CD8-positive, alpha-beta T cell (primary cell): ENCODE measurements at regions of chr12 and their contacts with region 1.

Region 1: DNA sequence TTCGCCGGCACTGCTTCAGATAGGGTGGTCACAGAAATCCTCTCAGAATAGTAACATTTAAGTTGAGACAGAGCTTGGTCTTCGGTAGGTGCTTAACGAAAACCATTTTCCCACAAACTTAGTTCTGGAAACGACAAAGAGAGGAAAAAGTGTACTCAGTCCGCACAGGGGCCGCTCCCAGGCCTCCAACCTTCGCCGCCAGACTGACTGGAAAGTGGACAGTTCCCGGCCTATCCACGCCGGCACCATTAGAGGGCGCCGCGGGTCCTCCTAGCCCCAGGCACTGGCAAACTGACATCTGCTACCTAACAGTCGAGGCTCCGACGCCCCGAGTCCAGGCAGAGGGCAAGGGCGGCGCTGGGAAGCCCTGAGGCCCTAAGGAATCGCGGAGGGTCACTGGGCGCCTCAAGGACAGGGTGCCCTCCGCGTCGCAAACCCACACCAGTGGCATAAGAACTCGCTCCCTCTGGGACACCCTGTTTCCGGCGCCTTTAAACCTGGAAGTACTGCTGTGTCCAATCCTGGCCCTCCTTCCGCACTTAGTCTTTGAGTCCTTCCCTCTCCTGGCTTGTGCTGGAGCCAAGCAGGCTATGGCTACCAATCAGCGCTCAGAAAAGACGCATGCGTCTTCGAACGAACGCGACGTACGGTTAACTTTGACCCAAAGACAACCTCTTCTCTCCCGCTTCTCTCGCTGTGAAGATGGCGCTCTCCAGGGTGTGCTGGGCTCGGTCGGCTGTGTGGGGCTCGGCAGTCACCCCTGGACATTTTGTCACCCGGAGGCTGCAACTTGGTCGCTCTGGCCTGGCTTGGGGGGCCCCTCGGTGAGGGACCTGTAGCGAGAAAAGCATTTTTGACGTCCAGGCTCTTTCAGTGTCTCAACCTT is at the start of gene LETMD1:
- DNase-seq: peak; percentile 83 to 99 (median 88)
- ATAC-seq: peak; percentile 94
- H3K4me3 ChIP-seq: peak within 1 kb of the TSS; percentile 79 to 83
- H3K4me3 Mint-ChIP-seq: peak within 1 kb of the TSS; percentile 98
- H3K27ac ChIP-seq: peak within 1 kb of the TSS; percentile 74 to 96
- H3K27ac Mint-ChIP-seq: peak within 1 kb of the TSS; percentile 97
- H3K4me1 ChIP-seq: peaks cover 23% of the 10 kb centered on the region
- H3K4me1 Mint-ChIP-seq: peaks cover 34% of the 10 kb centered on the region
- H3K27me3 ChIP-seq: no peaks in the 10 kb centered on the region
- H3K27me3 Mint-ChIP-seq: no peaks in the 10 kb centered on the region
- CTCF ChIP-seq: peak; percentile 95
- total RNA-seq, gene LETMD1: 51.3 to 55.2 TPM

Region 2: DNA sequence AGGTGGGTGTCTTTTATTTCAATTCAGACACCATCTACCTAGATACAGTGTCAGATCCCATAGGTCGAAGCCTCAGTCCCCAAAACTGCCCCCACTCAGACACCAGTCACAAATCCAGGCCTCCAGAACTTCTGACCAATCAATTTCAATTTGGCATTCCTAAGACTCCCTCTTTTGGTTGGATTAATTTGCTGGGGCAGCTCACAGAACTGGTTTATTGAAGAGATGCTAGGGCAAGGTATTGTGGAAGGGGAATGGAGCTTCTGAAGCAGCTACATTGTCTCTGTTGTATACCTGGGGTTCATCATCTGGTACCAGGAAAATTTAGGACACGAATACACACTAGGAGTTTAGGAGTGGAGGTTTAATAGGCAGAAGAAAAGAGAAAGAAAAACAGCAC is 660.8 kb before region 1 on chr12:
- CTCF ChIA-PET with region 1: no interaction called
- POLR2A ChIA-PET with region 1: no interaction called
- intact Hi-C with region 1: no loop called
- DNase-seq: no peak
- ATAC-seq: no peak
- H3K4me3 ChIP-seq: no peak overlapping the region
- H3K4me3 Mint-ChIP-seq: no peak overlapping the region
- H3K27ac ChIP-seq: no peak overlapping the region
- H3K27ac Mint-ChIP-seq: no peak overlapping the region
- H3K4me1 ChIP-seq: no peaks in the 10 kb centered on the region
- H3K4me1 Mint-ChIP-seq: no peaks in the 10 kb centered on the region
- H3K27me3 ChIP-seq: no peaks in the 10 kb centered on the region
- H3K27me3 Mint-ChIP-seq: no peaks in the 10 kb centered on the region
- CTCF ChIP-seq: no peak

Region 3: DNA sequence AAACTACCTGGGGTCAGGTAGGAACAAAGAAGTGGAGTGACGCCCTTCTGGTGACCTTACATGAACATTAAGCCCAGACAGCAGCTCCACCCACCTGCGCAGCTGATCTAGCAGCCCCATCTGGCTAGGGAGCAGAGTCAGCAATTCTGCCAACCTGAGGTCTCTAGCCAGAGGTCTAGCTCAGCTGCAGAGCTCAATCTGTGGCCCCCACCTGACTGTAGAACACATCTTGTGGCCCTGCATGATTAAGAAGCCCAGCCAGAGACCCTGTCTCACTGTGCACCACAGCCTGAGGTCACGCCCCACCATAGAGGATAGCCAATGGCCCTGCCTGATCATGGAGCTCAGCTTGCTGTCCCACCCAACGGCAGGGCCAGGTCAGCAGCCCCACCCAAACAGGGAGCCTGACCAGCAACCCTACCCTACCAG is 146.2 kb before region 1 on chr12:
- CTCF ChIA-PET with region 1: no interaction called
- POLR2A ChIA-PET with region 1: no interaction called
- intact Hi-C with region 1: no loop called
- DNase-seq: no peak
- ATAC-seq: no peak
- H3K4me3 ChIP-seq: no peak overlapping the region
- H3K4me3 Mint-ChIP-seq: no peak overlapping the region
- H3K27ac ChIP-seq: no peak overlapping the region
- H3K27ac Mint-ChIP-seq: no peak overlapping the region
- H3K4me1 ChIP-seq: no peaks in the 10 kb centered on the region
- H3K4me1 Mint-ChIP-seq: no peaks in the 10 kb centered on the region
- H3K27me3 ChIP-seq: no peaks in the 10 kb centered on the region
- H3K27me3 Mint-ChIP-seq: no peaks in the 10 kb centered on the region
- CTCF ChIP-seq: no peak

Region 4: GRCh38 chr12:50936821-50937530 is 110.9 kb before region 1 on chr12:
- CTCF ChIA-PET with region 1: no interaction called
- POLR2A ChIA-PET with region 1: no interaction called
- intact Hi-C with region 1: no loop called
- DNase-seq: no peak
- ATAC-seq: no peak
- H3K4me3 ChIP-seq: no peak overlapping the region
- H3K4me3 Mint-ChIP-seq: no peak overlapping the region
- H3K27ac ChIP-seq: no peak overlapping the region
- H3K27ac Mint-ChIP-seq: no peak overlapping the region
- H3K4me1 ChIP-seq: no peaks in the 10 kb centered on the region
- H3K4me1 Mint-ChIP-seq: no peaks in the 10 kb centered on the region
- H3K27me3 ChIP-seq: no peaks in the 10 kb centered on the region
- H3K27me3 Mint-ChIP-seq: no peaks in the 10 kb centered on the region
- CTCF ChIP-seq: no peak

Region 5: GRCh38 chr12:51083126-51083833 is 35.4 kb after region 1 on chr12 and contains the start of gene CSRNP2:
- CTCF ChIA-PET with region 1: interaction called, 3 read pairs
- POLR2A ChIA-PET with region 1: interaction called, 8 read pairs
- intact Hi-C with region 1: loop called (anchors 1 kb)
- DNase-seq: peak; percentile 90 to 97 (median 94)
- ATAC-seq: peak; percentile 99
- H3K4me3 ChIP-seq: peak within 1 kb of the TSS; percentile 88
- H3K4me3 Mint-ChIP-seq: peak within 1 kb of the TSS; percentile 94
- H3K27ac ChIP-seq: peak within 1 kb of the TSS; percentile 61 to 62
- H3K27ac Mint-ChIP-seq: peak within 1 kb of the TSS; percentile 91
- H3K4me1 ChIP-seq: peaks cover 12% of the 10 kb centered on the region
- H3K4me1 Mint-ChIP-seq: peaks cover 36% of the 10 kb centered on the region
- H3K27me3 ChIP-seq: no peaks in the 10 kb centered on the region
- H3K27me3 Mint-ChIP-seq: no peaks in the 10 kb centered on the region
- CTCF ChIP-seq: no peak
- total RNA-seq, gene CSRNP2: 19.5 to 19.9 TPM

Region 6: DNA sequence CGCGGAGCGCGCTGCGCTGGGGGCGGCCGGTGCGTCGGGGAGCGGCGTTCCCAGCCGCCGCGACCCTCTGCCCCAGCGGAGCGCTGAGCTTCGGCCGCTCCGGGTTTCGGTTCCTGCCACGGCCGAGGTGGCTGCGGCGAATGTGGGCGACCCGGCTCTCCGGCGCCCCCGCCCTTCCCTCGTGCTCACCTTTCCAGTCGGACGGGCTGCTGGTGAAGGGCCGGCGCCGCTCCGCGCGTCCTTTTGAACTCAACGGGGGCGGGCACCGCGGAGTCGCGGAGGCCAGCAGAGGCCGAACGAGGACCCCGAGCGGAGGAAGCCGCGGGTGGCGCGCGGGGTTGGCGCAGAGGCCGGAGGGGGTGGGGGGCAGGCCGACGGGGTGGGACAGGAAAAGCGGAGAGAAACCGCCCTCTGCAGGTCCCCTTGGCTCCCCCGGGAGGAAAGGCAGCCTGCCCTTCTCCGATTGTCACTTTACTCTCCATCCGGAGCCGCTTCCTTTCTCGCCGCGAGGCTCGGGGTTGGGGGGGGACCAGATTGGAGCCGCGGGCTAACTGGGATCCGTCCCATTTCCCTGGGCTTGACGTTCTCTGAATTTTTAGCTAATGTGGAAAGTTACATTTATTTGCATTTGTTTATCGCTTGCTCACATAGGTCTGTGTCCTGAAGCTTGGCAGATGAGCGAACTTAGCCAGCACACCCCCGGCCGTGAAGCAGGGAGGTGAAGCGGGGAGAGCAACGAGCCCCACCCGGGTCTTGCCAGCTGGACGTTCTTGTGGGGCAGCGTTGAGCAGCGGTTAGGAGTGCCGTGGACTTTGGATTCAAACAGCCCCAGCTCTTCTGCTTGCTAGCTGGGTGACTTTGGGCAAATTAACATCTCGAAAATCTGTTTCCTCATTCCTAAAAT is 222.4 kb after region 1 on chr12 and contains the start of gene SMAGP:
- CTCF ChIA-PET with region 1: interaction called, 4 read pairs
- POLR2A ChIA-PET with region 1: no interaction called
- intact Hi-C with region 1: loop called in 1 of 2 experiments (anchors 5 kb)
- DNase-seq: peak in 8 of 9 experiments; percentile 28 to 76 (median 52)
- ATAC-seq: peak; percentile 50
- H3K4me3 ChIP-seq: peak within 1 kb of the TSS; percentile 54 to 71
- H3K4me3 Mint-ChIP-seq: peak within 1 kb of the TSS; percentile 90
- H3K27ac ChIP-seq: peak within 1 kb of the TSS; percentile 42 to 58
- H3K27ac Mint-ChIP-seq: peak within 1 kb of the TSS; percentile 84
- H3K4me1 ChIP-seq: peaks cover 16% of the 10 kb centered on the region
- H3K4me1 Mint-ChIP-seq: peaks cover 23% of the 10 kb centered on the region
- H3K27me3 ChIP-seq: no peaks in the 10 kb centered on the region
- H3K27me3 Mint-ChIP-seq: no peaks in the 10 kb centered on the region
- CTCF ChIP-seq: no peak
- total RNA-seq, gene SMAGP: 1.9 to 2.3 TPM

Region 7: DNA sequence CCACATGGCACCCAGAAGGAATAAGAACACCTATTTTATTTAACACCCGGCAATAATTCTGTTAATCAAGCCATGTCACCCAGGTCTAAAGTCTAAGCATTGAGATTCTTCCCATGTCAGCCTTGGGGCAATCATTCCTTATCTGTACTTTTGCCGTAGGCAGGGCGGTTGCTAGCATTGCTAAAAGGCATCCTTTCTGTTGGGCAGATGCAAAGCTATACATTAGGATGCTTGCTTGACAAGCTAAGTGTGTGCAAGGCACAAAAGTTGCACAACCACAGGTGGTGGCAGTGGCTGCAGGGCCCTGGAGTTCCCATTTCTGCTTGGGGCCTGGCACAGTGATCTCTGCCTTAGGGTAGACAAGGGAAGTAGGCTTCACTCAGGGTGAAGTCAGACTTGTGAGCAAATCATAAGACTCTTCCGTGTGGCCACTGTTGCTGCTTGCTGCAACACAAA is 355.8 kb after region 1 on chr12:
- CTCF ChIA-PET with region 1: no interaction called
- POLR2A ChIA-PET with region 1: no interaction called
- intact Hi-C with region 1: no loop called
- DNase-seq: no peak
- ATAC-seq: no peak
- H3K4me3 ChIP-seq: no peak overlapping the region
- H3K4me3 Mint-ChIP-seq: no peak overlapping the region
- H3K27ac ChIP-seq: no peak overlapping the region
- H3K27ac Mint-ChIP-seq: no peak overlapping the region
- H3K4me1 ChIP-seq: no peaks in the 10 kb centered on the region
- H3K4me1 Mint-ChIP-seq: peaks cover 7% of the 10 kb centered on the region
- H3K27me3 ChIP-seq: no peaks in the 10 kb centered on the region
- H3K27me3 Mint-ChIP-seq: no peaks in the 10 kb centered on the region
- CTCF ChIP-seq: no peak